ENCODE measurements at regions of chr19 and their contacts with region 1.

Region 1: DNA sequence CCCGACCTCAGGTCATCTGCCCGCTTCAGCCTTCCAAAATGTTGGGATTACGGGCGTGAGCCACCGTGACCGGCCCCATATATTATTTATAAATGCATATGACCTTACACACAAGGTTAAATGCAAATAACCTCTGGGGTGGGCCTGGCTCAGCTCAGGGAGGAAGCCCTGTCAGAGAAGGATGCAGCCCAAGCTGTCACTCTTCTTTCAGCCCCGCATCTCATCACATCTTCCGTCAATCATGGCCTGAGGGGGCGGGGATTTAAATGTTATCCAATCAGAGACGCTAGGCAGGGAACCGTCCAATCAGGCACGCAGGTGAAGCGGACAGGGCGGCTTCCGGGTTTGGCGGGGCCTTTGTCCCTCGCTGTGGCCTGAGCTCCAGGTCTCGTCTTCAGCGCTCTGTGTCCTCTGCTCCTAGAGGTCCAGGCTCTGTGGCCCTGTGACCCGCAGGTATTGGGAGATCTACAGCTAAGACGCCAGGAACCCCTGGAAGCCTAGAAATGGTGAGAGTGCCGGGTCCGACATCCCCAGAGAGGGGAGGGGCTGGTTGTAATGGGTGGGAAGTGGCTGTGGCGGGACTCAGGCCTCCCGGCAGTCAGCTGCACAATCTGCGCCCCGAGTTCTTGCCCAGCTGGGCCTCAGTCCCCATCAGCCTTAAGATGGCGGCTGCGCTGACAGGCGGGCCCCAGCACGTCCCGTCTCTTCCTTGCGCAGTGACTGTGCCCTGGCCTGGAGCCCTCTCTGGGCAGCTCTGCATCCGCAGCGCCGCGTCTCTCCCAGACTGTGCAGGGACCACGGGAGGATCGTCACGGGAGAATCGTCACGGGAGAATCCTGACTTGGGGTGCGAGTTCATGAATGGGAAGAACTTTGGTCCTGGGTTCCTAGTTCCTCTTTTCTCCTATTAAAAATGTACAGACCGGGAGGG is at the start of gene ZNF430:
- DNase-seq: peak; percentile 87 to 96 (median 92)
- H3K4me3 ChIP-seq: peak within 1 kb of the TSS; percentile 98
- H3K4me3 Mint-ChIP-seq: peak within 1 kb of the TSS; percentile 99 to 100 (median 99)
- H3K27ac ChIP-seq: peak within 1 kb of the TSS; percentile 98
- H3K27ac Mint-ChIP-seq: peak within 1 kb of the TSS; percentile 97 to 100 (median 100)
- H3K4me1 ChIP-seq: peaks cover 28% of the 10 kb centered on the region
- H3K4me1 Mint-ChIP-seq: peaks cover 49 to 55% (median 55%) of the 10 kb centered on the region in 3 donors
- H3K27me3 ChIP-seq: no peaks in the 10 kb centered on the region
- H3K27me3 Mint-ChIP-seq: no peaks in the 10 kb centered on the region
- total RNA-seq, gene ZNF430: 18.7 to 20.5 TPM

Region 2: GRCh38 chr19:20999731-21000352 is 20.7 kb before region 1 on chr19:
- CTCF ChIA-PET with region 1: interaction called, 4 read pairs
- POLR2A ChIA-PET with region 1: interaction called, 23 read pairs
- DNase-seq: peak; percentile 75 to 91 (median 81)
- H3K4me3 ChIP-seq: peak overlapping the region; percentile 70
- H3K4me3 Mint-ChIP-seq: peak overlapping the region; percentile 77 to 90 (median 87)
- H3K27ac ChIP-seq: no peak overlapping the region
- H3K27ac Mint-ChIP-seq: peak overlapping the region in 5 of 8 donors; percentile 32 to 84 (median 60)
- H3K4me1 ChIP-seq: peaks cover 5% of the 10 kb centered on the region
- H3K4me1 Mint-ChIP-seq: peaks cover 4 to 10% (median 7%) of the 10 kb centered on the region in 3 donors
- H3K27me3 ChIP-seq: no peaks in the 10 kb centered on the region
- H3K27me3 Mint-ChIP-seq: no peaks in the 10 kb centered on the region

Region 3: GRCh38 chr19:21047716-21048115 is 27.2 kb after region 1 on chr19:
- CTCF ChIA-PET with region 1: no interaction called
- POLR2A ChIA-PET with region 1: no interaction called
- DNase-seq: no peak
- H3K4me3 ChIP-seq: no peak overlapping the region
- H3K4me3 Mint-ChIP-seq: no peak overlapping the region
- H3K27ac ChIP-seq: no peak overlapping the region
- H3K27ac Mint-ChIP-seq: peak overlapping the region in 1 of 8 donors; percentile 50
- H3K4me1 ChIP-seq: no peaks in the 10 kb centered on the region
- H3K4me1 Mint-ChIP-seq: peaks cover 41 to 49% (median 48%) of the 10 kb centered on the region in 3 donors
- H3K27me3 ChIP-seq: no peaks in the 10 kb centered on the region
- H3K27me3 Mint-ChIP-seq: no peaks in the 10 kb centered on the region

Region 4: DNA sequence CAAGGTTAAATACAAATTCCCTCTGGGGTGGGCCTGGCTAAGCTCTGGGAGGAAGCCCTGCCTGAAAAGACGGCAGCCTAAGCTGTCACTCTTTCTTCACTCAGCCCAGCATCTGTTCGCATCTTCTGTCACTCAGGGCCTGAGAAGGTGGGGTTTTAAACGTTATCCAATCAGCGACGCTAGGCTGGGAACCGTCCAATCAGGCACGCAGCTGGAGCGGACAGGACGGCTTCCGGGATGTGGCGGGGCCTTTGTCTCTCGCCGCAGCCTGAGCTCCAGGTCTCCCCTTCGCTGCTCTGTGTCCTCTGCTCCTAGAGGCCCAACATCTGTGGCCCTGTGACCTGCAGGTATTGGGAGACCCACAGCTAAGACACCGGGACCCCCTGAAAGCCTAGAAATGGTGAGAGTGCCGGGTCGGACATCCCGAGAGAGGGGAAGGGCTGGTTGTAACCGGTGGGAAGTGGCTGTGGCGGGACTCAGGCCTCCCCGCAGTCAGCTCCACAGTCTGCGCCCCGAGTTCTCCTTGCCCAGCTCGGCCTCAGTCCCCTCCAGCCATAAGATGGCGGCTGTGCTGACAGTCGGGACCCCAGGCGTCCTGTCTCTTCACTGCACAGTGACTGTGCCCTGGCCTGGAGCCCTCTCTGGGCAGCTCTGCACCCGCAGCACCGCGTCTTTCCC is 121.4 kb after region 1 on chr19 and contains the start of gene ZNF431:
- CTCF ChIA-PET with region 1: no interaction called
- POLR2A ChIA-PET with region 1: interaction called, 10 read pairs
- DNase-seq: peak; percentile 81 to 93 (median 89)
- H3K4me3 ChIP-seq: peak within 1 kb of the TSS; percentile 84
- H3K4me3 Mint-ChIP-seq: peak within 1 kb of the TSS; percentile 97 to 99 (median 97)
- H3K27ac ChIP-seq: peak within 1 kb of the TSS; percentile 84
- H3K27ac Mint-ChIP-seq: peak within 1 kb of the TSS; percentile 82 to 100 (median 97)
- H3K4me1 ChIP-seq: peaks cover 8% of the 10 kb centered on the region
- H3K4me1 Mint-ChIP-seq: peaks cover 33 to 58% (median 50%) of the 10 kb centered on the region in 3 donors
- H3K27me3 ChIP-seq: no peaks in the 10 kb centered on the region
- H3K27me3 Mint-ChIP-seq: no peaks in the 10 kb centered on the region
- total RNA-seq, gene ZNF431: 14.7 to 17.6 TPM